ENCODE measurements at regions of chr10 and their contacts with region 1.

Region 1: GRCh38 chr10:33376976-33377657 is 42.6 kb upstream of the NRP1 start:
- DNase-seq: no peak
- ATAC-seq: peak; percentile 68
- H3K4me3 Mint-ChIP-seq: no peak overlapping the region
- H3K27ac Mint-ChIP-seq: no peak overlapping the region
- H3K4me1 Mint-ChIP-seq: peaks cover 26% of the 10 kb centered on the region
- H3K27me3 Mint-ChIP-seq: peaks cover 20% of the 10 kb centered on the region

Region 2: DNA sequence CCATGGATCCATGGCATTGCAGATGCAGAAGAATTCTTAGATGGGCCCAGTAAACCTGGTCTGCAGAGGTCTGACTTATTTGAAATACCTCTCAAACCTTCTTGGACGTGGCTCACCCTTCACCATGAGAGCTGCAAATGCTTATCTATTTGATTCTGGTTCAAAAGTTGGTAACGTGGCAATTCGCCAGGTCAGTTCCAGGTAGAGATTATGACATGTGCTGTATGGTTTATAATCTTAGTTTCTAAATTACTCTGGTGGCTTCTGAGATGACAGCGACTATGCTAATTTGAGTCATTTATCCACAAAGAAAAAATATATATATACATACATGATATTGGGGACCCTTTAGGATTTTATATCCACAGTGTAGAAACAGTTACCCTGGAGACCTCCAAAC is 111.5 kb before region 1 on chr10:
- CTCF ChIA-PET with region 1: no interaction called
- POLR2A ChIA-PET with region 1: no interaction called
- intact Hi-C with region 1: loop called in 1 of 2 experiments (anchors 1 kb)
- DNase-seq: peak; percentile 84
- ATAC-seq: peak; percentile 47
- H3K4me3 Mint-ChIP-seq: no peak overlapping the region
- H3K27ac Mint-ChIP-seq: no peak overlapping the region
- H3K4me1 Mint-ChIP-seq: peaks cover 22% of the 10 kb centered on the region
- H3K27me3 Mint-ChIP-seq: peaks cover 29% of the 10 kb centered on the region

Region 3: DNA sequence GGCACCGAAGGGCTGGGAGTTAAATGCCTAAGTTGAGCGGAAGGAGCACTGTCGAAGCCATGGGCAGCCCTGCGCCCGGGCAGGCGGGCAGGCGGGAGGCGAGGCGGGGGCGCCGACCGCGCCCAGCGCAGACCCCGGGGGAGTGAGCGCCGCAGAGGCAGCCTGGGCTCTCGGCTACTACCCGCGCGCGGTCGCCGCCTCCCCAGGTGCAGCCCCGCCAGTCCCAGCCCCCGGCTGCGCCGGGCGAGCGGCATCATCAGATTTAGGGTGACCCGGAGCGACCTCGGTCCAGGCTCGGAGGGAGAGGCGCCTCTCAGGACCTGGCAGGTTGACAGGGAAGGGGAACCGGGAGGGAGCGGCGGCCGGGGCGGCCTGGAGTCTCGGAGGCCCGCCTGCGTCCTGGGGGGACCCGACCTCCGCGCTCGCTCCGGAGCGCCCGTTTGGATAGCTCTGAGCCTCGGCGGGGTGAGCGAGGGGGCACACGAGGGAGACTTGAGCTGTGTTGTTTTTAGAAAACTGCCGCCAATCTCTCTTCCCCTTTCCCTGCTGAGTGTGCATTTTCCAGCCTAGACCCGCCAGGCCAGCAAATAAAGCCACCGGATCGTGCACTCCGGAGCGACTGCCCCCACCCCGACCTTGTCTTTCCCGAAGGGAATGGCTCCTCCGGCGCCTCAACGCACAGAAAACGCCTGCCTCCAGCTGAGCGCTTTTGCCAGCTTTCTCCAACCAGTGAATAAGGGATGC is 40.4 kb before region 1 on chr10:
- CTCF ChIA-PET with region 1: no interaction called
- POLR2A ChIA-PET with region 1: no interaction called
- intact Hi-C with region 1: no loop called
- DNase-seq: peak; percentile 10
- ATAC-seq: no peak
- H3K4me3 Mint-ChIP-seq: no peak overlapping the region
- H3K27ac Mint-ChIP-seq: no peak overlapping the region
- H3K4me1 Mint-ChIP-seq: peaks cover 16% of the 10 kb centered on the region
- H3K27me3 Mint-ChIP-seq: peaks cover 58% of the 10 kb centered on the region